CD14-positive monocyte (primary cell): ENCODE measurements at regions of chr5 and their contacts with region 1.

Region 1: GRCh38 chr5:40679155-40679913 is 381 bp upstream of the PTGER4 start:
- DNase-seq: peak; percentile 82 to 88 (median 87)
- H3K4me3 ChIP-seq: peak overlapping the region; percentile 73 to 98 (median 95)
- H3K4me3 Mint-ChIP-seq: peak overlapping the region; percentile 100
- H3K27ac ChIP-seq: peak overlapping the region; percentile 83 to 92
- H3K27ac Mint-ChIP-seq: peak overlapping the region; percentile 91 to 98 (median 96)
- H3K4me1 ChIP-seq: peaks cover 44 to 64% of the 10 kb centered on the region in 2 donors
- H3K4me1 Mint-ChIP-seq: peaks cover 59% of the 10 kb centered on the region
- H3K27me3 ChIP-seq: no peaks in the 10 kb centered on the region
- H3K27me3 Mint-ChIP-seq: peaks cover 0 to 2% (median 0%) of the 10 kb centered on the region in 3 donors
- CTCF ChIP-seq: no peak

Region 2: GRCh38 chr5:40486437-40487275 is 192.7 kb before region 1 on chr5:
- intact Hi-C with region 1: loop called (anchors 5 to 10 kb)
- DNase-seq: peak; percentile 92 to 98 (median 97)
- H3K4me3 ChIP-seq: peak overlapping the region in 1 of 3 experiments; percentile 59
- H3K4me3 Mint-ChIP-seq: peak overlapping the region in 1 of 2 donors; percentile 67
- H3K27ac ChIP-seq: peak overlapping the region; percentile 78 to 92
- H3K27ac Mint-ChIP-seq: peak overlapping the region; percentile 92 to 98 (median 96)
- H3K4me1 ChIP-seq: peaks cover 58 to 78% of the 10 kb centered on the region in 2 donors
- H3K4me1 Mint-ChIP-seq: peaks cover 69% of the 10 kb centered on the region
- H3K27me3 ChIP-seq: no peaks in the 10 kb centered on the region
- H3K27me3 Mint-ChIP-seq: no peaks in the 10 kb centered on the region
- CTCF ChIP-seq: no peak

Region 3: DNA sequence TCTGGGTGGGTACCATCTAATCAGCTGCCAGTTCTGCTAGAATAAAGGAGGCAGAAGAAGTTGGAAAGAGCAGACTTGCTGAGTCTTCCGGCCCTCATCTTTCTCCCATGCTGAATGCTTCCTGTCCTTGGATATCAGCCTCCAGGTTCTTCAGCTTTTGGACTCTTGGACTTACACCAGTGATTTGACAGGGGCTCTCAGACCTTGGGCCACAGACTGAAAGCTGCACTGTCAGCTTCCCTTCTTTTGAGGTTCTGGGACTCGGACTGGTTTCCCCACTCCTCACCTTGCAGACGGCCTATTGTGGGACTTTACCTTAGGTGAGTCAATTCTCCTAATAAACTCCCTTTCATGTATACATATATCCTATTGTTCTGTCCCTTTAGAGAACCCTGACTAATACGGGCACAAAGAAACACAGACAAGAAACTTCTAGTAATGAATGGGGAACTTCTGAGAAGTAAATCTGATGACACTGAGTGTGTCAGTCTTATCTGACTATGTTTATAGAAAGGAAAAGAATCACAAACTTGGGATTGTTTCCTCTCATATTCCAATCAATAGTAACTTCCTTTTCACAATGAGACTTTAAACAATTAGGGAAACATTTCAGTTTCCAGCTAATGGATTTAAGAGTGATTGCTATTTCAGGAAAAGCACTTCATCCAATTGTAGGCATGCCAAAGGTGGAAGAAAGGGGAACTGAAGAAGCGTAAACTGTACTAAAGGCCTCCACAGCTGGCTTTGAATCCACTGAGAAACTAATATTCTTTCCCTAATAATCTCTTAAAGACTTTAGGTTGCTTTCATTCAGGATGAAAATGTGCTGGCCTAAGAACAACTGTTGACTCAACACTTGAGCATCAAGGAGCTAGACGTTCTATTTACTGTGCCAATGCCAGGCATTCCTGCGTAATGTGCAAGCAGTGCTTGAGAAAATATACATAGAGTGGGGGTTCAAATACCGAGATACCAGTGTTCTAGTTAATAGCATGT is 127.5 kb before region 1 on chr5:
- intact Hi-C with region 1: no loop called
- DNase-seq: no peak
- H3K4me3 ChIP-seq: no peak overlapping the region
- H3K4me3 Mint-ChIP-seq: no peak overlapping the region
- H3K27ac ChIP-seq: no peak overlapping the region
- H3K27ac Mint-ChIP-seq: peak overlapping the region in 2 of 7 donors; percentile 63 to 76
- H3K4me1 ChIP-seq: no peaks in the 10 kb centered on the region
- H3K4me1 Mint-ChIP-seq: peaks cover 3% of the 10 kb centered on the region
- H3K27me3 ChIP-seq: no peaks in the 10 kb centered on the region
- H3K27me3 Mint-ChIP-seq: no peaks in the 10 kb centered on the region
- CTCF ChIP-seq: no peak

Region 4: DNA sequence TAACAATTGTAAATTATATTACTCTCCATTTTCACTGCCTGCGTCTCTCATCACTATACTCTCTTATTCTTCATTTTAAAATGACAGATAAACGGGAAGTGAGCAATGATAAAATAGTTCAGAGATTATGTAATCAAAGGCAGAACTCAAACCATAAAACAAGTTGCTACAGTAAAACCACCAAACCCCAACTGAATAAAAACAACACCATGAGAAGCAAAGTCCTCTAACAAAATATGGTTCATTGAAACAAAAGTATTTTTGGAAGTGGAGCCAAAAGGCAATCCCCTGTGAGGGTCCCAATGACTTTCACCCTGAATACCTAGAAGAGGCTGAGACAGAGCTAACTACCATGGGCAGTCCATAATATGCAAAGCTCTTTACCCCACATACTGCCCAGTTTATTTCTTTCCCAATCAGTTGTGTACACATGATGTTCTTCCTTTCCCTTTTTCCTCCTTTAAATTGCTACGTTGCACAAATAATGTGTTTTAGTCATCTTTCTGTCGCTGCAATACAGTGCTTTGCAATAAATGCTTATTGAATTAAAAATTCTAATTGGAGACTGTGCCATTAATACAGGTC is 63.7 kb before region 1 on chr5:
- intact Hi-C with region 1: loop called (anchors 5 to 10 kb)
- DNase-seq: peak; percentile 69 to 84 (median 80)
- H3K4me3 ChIP-seq: peak overlapping the region in 2 of 3 experiments; percentile 16 to 60
- H3K4me3 Mint-ChIP-seq: peak overlapping the region in 1 of 2 donors; percentile 53
- H3K27ac ChIP-seq: peak overlapping the region; percentile 15 to 90
- H3K27ac Mint-ChIP-seq: peak overlapping the region; percentile 91 to 98 (median 95)
- H3K4me1 ChIP-seq: peaks cover 33 to 46% of the 10 kb centered on the region in 2 donors
- H3K4me1 Mint-ChIP-seq: peaks cover 37% of the 10 kb centered on the region
- H3K27me3 ChIP-seq: no peaks in the 10 kb centered on the region
- H3K27me3 Mint-ChIP-seq: no peaks in the 10 kb centered on the region
- CTCF ChIP-seq: no peak

Region 5: DNA sequence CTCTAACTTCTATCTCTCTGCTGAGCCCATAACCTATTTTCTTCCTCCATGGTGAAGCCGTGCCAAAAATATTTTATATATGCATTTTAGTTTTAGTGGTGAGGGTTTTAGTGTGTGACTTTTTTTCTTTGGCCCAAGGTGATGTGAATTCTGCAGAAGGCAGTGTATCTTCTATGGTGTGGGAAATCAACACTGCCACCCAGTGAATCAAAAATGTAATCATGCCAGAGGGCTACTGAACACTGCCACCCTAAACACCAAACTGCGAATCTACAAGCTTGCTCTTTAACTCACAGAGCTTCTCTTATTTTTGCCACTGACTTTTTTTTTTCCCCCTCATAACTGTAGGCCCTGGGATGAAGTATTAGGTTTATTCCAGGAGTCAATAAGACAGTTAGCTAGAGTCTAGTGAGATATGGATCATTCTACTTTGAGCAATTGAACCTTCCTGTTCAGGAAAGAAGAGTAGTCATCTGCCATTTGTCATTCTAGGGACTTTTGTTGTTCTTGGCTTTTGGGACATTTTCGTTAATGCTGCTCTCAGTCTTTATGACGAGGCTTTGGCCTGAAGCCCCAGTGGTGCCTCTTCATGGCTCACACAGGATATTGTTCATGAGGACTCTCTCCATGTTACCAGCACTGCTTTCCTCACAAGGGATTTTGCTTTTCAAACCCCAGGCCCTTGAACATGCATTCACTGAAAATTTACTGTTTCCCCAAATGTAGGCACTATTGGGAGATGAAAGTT is 283.0 kb after region 1 on chr5:
- intact Hi-C with region 1: no loop called
- DNase-seq: no peak
- H3K4me3 ChIP-seq: no peak overlapping the region
- H3K4me3 Mint-ChIP-seq: no peak overlapping the region
- H3K27ac ChIP-seq: no peak overlapping the region
- H3K27ac Mint-ChIP-seq: no peak overlapping the region
- H3K4me1 ChIP-seq: no peaks in the 10 kb centered on the region
- H3K4me1 Mint-ChIP-seq: no peaks in the 10 kb centered on the region
- H3K27me3 ChIP-seq: no peaks in the 10 kb centered on the region
- H3K27me3 Mint-ChIP-seq: peaks cover 0 to 3% (median 0%) of the 10 kb centered on the region in 3 donors
- CTCF ChIP-seq: no peak